MCF 10A (cell line): ENCODE measurements at regions of chr12 and their contacts with region 1.

Region 1: GRCh38 chr12:43728117-43728516 is 30.5 kb downstream of the PUS7L start:
- DNase-seq: no peak
- H3K4me3 Mint-ChIP-seq: no peak overlapping the region
- H3K27ac Mint-ChIP-seq: no peak overlapping the region
- H3K4me1 Mint-ChIP-seq: no peaks in the 10 kb centered on the region
- H3K27me3 Mint-ChIP-seq: no peaks in the 10 kb centered on the region
- CTCF ChIP-seq: no peak

Region 2: DNA sequence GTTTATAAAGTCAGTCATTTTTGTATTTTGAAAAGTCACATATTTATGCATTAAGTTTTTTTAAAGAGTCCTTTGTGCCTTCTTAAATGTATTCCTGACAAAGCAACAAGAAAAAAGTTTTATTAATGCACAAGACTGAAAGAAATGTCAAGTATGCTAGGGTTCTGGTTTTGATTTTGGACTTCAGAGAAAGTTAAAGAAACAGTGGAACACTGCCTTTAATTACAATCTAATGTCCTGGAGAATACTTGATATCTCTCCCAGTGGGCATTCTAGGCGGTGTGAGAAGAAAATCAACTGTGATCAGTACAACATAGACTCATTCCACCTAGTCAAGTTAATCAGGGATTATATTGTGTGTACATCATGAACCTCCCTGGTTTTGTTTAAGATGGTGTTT is 1188.4 kb before region 1 on chr12:
- CTCF ChIA-PET with region 1: no interaction called
- POLR2A ChIA-PET with region 1: no interaction called
- intact Hi-C with region 1: no loop called
- DNase-seq: no peak
- H3K4me3 Mint-ChIP-seq: no peak overlapping the region
- H3K27ac Mint-ChIP-seq: no peak overlapping the region
- H3K4me1 Mint-ChIP-seq: peaks cover 5% of the 10 kb centered on the region
- H3K27me3 Mint-ChIP-seq: no peaks in the 10 kb centered on the region
- CTCF ChIP-seq: no peak

Region 3: DNA sequence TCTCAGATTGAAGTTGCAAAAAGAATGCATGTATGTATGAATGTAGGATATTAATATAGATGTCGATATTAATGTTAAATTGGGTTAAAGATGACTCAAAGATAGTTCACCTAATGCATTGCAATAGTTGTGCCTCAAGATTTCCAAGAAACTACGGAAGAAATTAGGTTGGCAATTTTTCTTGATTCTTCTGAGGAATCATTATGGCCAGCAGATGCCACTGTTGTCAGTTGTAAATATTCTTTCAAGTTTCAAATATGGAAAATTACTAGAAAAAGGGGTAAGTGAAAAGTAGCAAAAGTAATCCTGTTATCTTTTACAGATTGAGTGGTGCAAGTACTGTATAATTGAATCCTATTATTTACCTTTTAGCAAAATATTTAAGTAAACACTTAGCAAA is 378.3 kb before region 1 on chr12:
- CTCF ChIA-PET with region 1: interaction called, 3 read pairs
- POLR2A ChIA-PET with region 1: no interaction called
- intact Hi-C with region 1: loop called (anchors 1 kb)
- DNase-seq: peak; percentile 29
- H3K4me3 Mint-ChIP-seq: no peak overlapping the region
- H3K27ac Mint-ChIP-seq: no peak overlapping the region
- H3K4me1 Mint-ChIP-seq: no peaks in the 10 kb centered on the region
- H3K27me3 Mint-ChIP-seq: peaks cover 46% of the 10 kb centered on the region
- CTCF ChIP-seq: peak; percentile 50

Region 4: DNA sequence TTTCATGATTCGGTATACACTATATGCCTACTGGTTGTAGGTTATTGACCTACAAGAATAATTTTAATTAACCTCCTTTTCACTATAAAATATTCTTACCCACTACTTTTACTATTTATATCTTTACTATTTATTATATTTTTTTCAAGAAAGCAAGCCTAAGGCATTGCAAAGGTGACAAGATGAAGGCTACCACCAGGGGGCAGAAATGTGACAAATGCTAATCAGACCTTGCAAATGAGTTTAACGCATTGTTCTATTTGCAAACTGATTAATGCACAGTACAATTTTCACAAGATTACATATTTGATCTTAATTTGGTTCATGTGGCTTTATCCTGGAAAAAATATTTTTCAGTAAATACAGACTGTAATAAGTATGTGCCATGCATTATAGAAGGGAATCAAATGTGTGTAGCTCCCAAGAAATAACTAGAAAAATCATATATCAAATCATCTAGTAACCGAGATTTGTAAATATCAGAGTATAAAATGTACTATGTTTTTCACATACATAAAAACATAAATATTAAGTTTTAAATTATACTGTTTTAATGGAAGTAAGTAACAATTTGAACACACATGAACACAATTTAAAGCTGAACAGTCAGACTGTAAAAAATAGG is 283.1 kb before region 1 on chr12:
- CTCF ChIA-PET with region 1: interaction called, 5 read pairs
- POLR2A ChIA-PET with region 1: interaction called, 4 read pairs
- intact Hi-C with region 1: loop called (anchors 1 kb)
- DNase-seq: peak; percentile 74
- H3K4me3 Mint-ChIP-seq: no peak overlapping the region
- H3K27ac Mint-ChIP-seq: no peak overlapping the region
- H3K4me1 Mint-ChIP-seq: no peaks in the 10 kb centered on the region
- H3K27me3 Mint-ChIP-seq: peaks cover 40% of the 10 kb centered on the region
- CTCF ChIP-seq: peak; percentile 70

Region 5: DNA sequence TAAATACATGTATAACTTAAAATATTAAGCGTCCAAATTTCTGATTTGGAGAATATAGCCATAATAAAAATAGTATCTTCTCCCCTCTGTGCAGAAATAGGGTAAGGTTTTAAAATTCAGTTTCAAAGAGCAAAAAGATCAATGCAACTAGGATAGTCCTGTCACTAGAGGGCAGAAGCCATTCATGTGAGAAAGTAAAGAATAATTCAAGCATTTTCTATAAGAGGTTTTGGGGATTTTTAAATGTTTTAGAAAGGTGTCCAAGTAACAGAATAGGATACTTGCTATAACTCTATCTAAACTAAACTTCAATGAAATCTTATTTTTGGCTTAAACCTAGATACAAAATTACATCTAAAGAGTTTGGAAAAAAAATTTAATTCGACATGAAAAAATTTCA is 226.4 kb before region 1 on chr12:
- CTCF ChIA-PET with region 1: interaction called, 24 read pairs
- POLR2A ChIA-PET with region 1: no interaction called
- intact Hi-C with region 1: loop called (anchors 5 kb)
- DNase-seq: peak; percentile 45
- H3K4me3 Mint-ChIP-seq: no peak overlapping the region
- H3K27ac Mint-ChIP-seq: no peak overlapping the region
- H3K4me1 Mint-ChIP-seq: no peaks in the 10 kb centered on the region
- H3K27me3 Mint-ChIP-seq: peaks cover 59% of the 10 kb centered on the region
- CTCF ChIP-seq: peak; percentile 53

Region 6: DNA sequence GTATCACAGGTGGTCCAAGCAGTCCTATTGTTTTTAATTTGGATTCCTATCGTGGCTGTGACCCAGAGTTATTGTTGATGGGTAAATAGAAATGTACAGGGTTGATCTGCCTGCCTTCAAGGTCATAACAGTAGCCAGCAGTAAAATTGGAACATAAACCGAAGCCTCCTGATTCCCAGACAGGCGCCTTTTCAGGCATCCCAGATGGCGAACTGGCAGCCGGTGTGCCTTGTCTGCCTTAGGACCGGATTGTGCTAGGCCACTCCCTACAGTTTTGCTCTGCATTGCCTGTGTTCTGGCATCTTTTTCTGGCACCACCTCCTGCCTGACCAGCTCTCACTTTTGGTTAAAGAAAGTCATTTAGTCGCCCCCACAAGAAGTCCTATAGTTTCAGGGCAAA is 130.0 kb after region 1 on chr12:
- CTCF ChIA-PET with region 1: no interaction called
- POLR2A ChIA-PET with region 1: no interaction called
- intact Hi-C with region 1: no loop called
- DNase-seq: no peak
- H3K4me3 Mint-ChIP-seq: no peak overlapping the region
- H3K27ac Mint-ChIP-seq: no peak overlapping the region
- H3K4me1 Mint-ChIP-seq: peaks cover 11% of the 10 kb centered on the region
- H3K27me3 Mint-ChIP-seq: no peaks in the 10 kb centered on the region
- CTCF ChIP-seq: no peak